PC-3 (cell line): ENCODE measurements at regions of chr19 and their contacts with region 1.

Region 1: DNA sequence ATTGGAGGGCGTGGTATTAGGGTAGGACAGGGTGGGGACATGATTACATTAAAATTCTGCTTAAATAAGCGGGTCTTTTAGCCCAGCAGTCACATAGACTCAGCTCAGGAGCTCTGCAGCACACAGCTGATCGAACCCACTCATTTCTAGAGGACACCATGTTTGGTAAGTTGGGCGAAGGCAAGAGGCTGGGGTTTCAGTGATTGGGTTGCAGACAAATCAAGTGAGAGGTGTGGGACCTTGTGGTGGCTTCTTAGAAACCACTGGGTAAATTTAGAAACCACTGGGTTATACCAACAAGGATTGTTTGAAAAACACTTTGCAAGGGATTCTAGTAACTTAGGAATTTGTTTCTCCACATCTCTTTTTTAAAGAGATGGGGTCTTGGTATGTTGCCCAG is at the start of gene LEUTX:
- DNase-seq: no peak
- ATAC-seq: no peak
- H3K4me3 ChIP-seq: no peak within 1 kb of the TSS
- H3K27ac ChIP-seq: no peak within 1 kb of the TSS
- H3K4me1 ChIP-seq: no peaks in the 10 kb centered on the region
- H3K27me3 ChIP-seq: peaks cover 45% of the 10 kb centered on the region
- CTCF ChIP-seq: no peak
- total RNA-seq, gene LEUTX: not detected in 2 replicates

Region 2: GRCh38 chr19:39738814-39739213 is 39.9 kb before region 1 on chr19:
- CTCF ChIA-PET with region 1: no interaction called
- POLR2A ChIA-PET with region 1: no interaction called
- intact Hi-C with region 1: no loop called
- DNase-seq: no peak
- ATAC-seq: no peak
- H3K4me3 ChIP-seq: no peak overlapping the region
- H3K27ac ChIP-seq: no peak overlapping the region
- H3K4me1 ChIP-seq: no peaks in the 10 kb centered on the region
- H3K27me3 ChIP-seq: peaks cover 34% of the 10 kb centered on the region
- CTCF ChIP-seq: no peak

Region 3: DNA sequence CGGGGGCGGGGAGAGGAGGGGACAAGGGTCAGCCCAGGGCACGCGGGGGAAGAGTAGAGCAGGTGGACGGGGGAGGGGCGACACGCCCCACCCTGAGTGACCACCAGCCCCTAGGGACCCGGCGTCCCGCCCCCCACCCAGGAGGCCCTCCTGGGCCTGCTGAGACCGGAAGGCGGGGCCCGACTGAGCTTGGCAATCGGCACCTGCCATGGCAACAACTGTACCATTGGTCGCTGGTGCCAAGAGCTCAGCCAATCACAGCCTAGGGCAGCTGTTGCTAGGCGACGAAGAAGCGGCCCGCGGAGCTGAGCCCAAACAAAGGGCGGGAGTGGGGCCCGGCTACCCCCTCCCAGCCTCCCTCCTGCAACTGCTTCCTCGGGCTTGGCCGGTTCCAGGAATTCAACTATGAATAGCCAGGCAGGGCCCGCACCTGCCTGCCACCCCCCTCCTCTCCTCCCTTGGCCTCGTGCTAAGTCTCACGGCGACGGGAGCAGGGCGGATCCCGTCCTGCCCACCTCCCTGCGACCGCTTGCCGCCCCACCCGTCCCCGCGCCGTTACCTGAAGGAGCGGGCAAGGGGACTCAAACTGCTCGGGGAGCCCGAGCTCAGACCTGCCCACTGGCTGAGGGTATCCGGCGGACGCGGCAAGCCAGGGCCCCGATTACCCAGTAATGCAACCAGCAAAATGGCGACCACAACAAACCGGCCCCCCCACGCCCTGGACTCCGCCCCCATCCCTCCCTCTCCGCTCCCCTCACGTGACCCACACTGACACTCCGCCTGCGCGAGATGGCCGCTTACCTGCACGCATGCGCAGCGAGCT is 54.9 kb after region 1 on chr19 and contains the start of gene DYRK1B:
- CTCF ChIA-PET with region 1: no interaction called
- POLR2A ChIA-PET with region 1: interaction called, 17 read pairs
- intact Hi-C with region 1: no loop called
- DNase-seq: peak; percentile 81
- ATAC-seq: peak; percentile 95
- H3K4me3 ChIP-seq: peak within 1 kb of the TSS; percentile 73
- H3K27ac ChIP-seq: peak within 1 kb of the TSS; percentile 49; the same call in 1 of the 2 replicates
- H3K4me1 ChIP-seq: peaks cover 4% of the 10 kb centered on the region; the same call in 1 of the 2 replicates
- H3K27me3 ChIP-seq: no peaks in the 10 kb centered on the region
- CTCF ChIP-seq: no peak
- total RNA-seq, gene DYRK1B: 2.4 and 2.8 TPM in 2 replicates